CD14-positive monocyte (primary cell): ENCODE measurements at regions of chr9 and their contacts with region 1.

Region 1: DNA sequence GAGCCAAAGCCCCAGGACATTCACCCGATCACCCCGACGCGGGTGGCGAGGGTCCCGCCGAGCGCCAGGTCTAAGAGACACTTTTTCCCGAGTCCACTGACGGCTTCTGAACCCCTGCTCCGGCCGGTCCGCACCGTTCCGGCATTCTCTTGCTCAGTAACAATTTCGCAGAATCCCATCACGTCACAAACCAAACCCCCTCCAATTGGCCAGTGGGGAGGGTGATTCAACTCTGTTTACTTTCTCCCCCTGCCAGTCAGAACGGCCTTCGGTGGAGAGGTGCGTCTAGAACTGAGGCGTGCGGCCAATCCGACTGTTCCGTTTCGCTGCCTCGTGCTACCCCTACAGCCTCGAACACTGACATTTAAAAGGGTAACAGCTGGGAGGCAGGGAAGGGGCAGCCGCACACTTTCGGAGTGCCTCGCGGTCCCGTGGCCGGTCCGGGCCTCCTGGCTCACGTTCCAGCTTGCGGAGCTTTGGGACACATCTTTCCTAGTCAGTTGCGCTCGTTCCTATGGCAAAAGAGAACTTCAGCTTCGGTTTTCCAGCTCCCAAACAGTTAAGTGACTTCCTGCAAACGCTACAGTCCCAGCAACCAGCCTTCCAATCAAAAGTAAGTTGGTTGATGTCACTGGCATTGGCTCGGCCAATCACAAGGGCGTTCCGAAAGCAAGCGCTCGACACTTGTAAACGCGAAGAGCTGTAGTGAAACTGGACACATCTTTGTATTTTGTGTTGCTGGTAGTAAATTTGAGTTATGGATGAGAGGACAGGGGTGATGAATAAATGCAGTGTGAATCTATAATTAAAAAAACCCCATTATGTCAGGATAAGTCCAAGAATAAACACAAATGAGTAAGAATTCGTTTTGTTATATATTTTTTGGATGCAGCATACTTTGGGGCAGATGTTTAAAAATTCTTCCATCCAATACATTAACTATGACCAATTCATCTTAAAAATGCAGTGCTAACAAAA is at the start of gene KLF9:
- DNase-seq: peak; percentile 93 to 95 (median 94)
- H3K4me3 ChIP-seq: peak within 1 kb of the TSS; percentile 39 to 89 (median 89)
- H3K4me3 Mint-ChIP-seq: peak within 1 kb of the TSS; percentile 92 to 99
- H3K27ac ChIP-seq: peak within 1 kb of the TSS; percentile 92 to 99
- H3K27ac Mint-ChIP-seq: peak within 1 kb of the TSS; percentile 98 to 100 (median 99)
- H3K4me1 ChIP-seq: peaks cover 59 to 65% of the 10 kb centered on the region in 2 donors
- H3K4me1 Mint-ChIP-seq: peaks cover 41% of the 10 kb centered on the region
- H3K27me3 ChIP-seq: no peaks in the 10 kb centered on the region
- H3K27me3 Mint-ChIP-seq: peaks cover 0 to 4% (median 2%) of the 10 kb centered on the region in 3 donors
- CTCF ChIP-seq: no peak
- polyA plus RNA-seq, gene KLF9: 0.18 to 26.1 (median 0.72) TPM

Region 2: DNA sequence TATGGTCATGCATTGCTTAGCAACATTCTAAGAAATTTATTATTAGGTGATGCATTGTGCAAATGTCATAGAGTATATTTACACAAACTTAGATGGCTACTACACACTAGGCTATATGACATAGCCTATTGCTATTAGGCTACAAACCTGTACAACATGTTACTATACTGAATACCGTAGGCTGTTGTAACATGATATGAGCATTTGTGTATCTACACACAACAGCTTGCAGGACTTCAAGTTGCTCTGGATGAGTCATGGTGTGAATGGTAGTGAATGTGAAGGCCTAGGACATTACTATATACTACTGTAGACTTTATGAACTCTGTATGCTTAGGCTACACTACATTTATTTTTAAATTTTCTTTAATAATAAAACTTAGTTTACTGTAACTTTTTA is 477.7 kb before region 1 on chr9:
- intact Hi-C with region 1: loop called in 1 of 2 experiments (anchors 5 kb)
- DNase-seq: peak in 2 of 3 donors; percentile 17 to 28
- H3K4me3 ChIP-seq: no peak overlapping the region
- H3K4me3 Mint-ChIP-seq: no peak overlapping the region
- H3K27ac ChIP-seq: no peak overlapping the region
- H3K27ac Mint-ChIP-seq: no peak overlapping the region
- H3K4me1 ChIP-seq: peaks cover 24 to 39% of the 10 kb centered on the region in 2 donors
- H3K4me1 Mint-ChIP-seq: peaks cover 37% of the 10 kb centered on the region
- H3K27me3 ChIP-seq: no peaks in the 10 kb centered on the region
- H3K27me3 Mint-ChIP-seq: peaks cover 0 to 6% (median 1%) of the 10 kb centered on the region in 3 donors
- CTCF ChIP-seq: no peak

Region 3: GRCh38 chr9:70451765-70452164 is 37.7 kb after region 1 on chr9:
- intact Hi-C with region 1: no loop called
- DNase-seq: no peak
- H3K4me3 ChIP-seq: no peak overlapping the region
- H3K4me3 Mint-ChIP-seq: no peak overlapping the region
- H3K27ac ChIP-seq: no peak overlapping the region
- H3K27ac Mint-ChIP-seq: no peak overlapping the region
- H3K4me1 ChIP-seq: no peaks in the 10 kb centered on the region
- H3K4me1 Mint-ChIP-seq: no peaks in the 10 kb centered on the region
- H3K27me3 ChIP-seq: no peaks in the 10 kb centered on the region
- H3K27me3 Mint-ChIP-seq: peaks cover 0 to 3% (median 2%) of the 10 kb centered on the region in 3 donors
- CTCF ChIP-seq: no peak